Activated naive CD4-positive, alpha-beta T cell treated with anti-CD3 and anti-CD28 coated beads for 36 hours (primary cell): ENCODE measurements at regions of chr10 and their contacts with region 1.

Region 1: GRCh38 chr10:50624866-50625692 is 1.3 kb upstream of the SGMS1 start:
- DNase-seq: peak; percentile 62
- H3K4me3 Mint-ChIP-seq: peak overlapping the region; percentile 88
- H3K27ac Mint-ChIP-seq: peak overlapping the region; percentile 91
- H3K4me1 Mint-ChIP-seq: peaks cover 30% of the 10 kb centered on the region
- H3K27me3 Mint-ChIP-seq: no peaks in the 10 kb centered on the region

Region 2: DNA sequence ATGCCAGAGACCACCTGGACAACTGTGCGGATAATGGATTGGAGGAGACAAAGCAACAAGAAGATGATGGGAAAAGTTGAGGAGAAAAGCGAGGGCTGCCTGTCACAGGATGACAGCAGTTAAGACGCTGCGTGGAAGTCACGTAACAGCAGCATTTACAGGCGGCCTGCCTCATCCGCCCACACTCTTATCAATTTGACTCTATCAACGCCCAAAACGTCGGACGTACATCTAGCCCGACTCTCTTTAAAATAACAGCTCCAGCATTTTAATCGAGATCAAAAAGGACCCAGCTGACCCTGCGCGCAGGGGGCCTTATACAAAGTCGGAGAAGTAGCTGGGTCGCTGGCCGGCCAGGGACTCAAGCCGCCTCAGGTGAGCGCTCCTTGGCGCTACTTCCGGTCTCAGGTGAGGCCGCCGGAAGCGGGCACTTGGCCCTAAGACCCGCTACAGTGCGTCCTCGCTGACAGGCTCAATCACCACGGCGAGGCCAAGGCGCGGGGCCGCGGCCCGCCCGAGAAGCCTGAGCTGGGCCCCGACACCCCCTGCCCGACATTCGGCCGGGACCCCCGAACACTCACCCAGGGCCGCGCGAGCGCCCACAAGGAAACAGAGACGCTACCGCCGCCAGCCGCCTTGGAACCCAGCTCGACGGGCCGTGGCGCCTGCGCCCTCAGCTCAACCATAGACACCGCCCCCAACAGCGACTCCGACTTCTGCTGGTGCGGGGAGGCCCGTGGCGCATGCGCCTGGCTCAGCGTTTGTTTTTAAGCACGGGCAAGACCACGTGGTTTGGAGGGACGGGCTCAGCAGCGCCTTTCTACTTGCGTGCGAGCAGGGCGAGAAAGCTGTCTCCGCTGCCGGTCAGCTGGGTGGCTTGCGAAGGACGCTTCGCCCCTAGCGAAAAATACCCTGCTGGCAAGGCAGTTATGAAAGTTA is 1086.4 kb before region 1 on chr10 and contains the start of gene ERCC6:
- CTCF ChIA-PET with region 1: no interaction called
- intact Hi-C with region 1: loop called (anchors 2 kb)
- DNase-seq: peak; percentile 97
- H3K4me3 Mint-ChIP-seq: peak within 1 kb of the TSS; percentile 90
- H3K27ac Mint-ChIP-seq: peak within 1 kb of the TSS; percentile 92
- H3K4me1 Mint-ChIP-seq: peaks cover 34% of the 10 kb centered on the region
- H3K27me3 Mint-ChIP-seq: peaks cover 14% of the 10 kb centered on the region
- total RNA-seq, gene ERCC6: 14.2 to 16.2 TPM

Region 3: GRCh38 chr10:50367732-50368131 is 257.3 kb before region 1 on chr10:
- CTCF ChIA-PET with region 1: interaction called, 5 read pairs
- intact Hi-C with region 1: loop called (anchors 2 kb)
- DNase-seq: peak; percentile 19
- H3K4me3 Mint-ChIP-seq: no peak overlapping the region
- H3K27ac Mint-ChIP-seq: no peak overlapping the region
- H3K4me1 Mint-ChIP-seq: peaks cover 2% of the 10 kb centered on the region
- H3K27me3 Mint-ChIP-seq: no peaks in the 10 kb centered on the region

Region 4: GRCh38 chr10:50431791-50432190 is 193.3 kb before region 1 on chr10:
- CTCF ChIA-PET with region 1: no interaction called
- intact Hi-C with region 1: loop called (anchors 1 kb)
- DNase-seq: peak; percentile 45
- H3K4me3 Mint-ChIP-seq: no peak overlapping the region
- H3K27ac Mint-ChIP-seq: peak overlapping the region; percentile 39
- H3K4me1 Mint-ChIP-seq: peaks cover 33% of the 10 kb centered on the region
- H3K27me3 Mint-ChIP-seq: no peaks in the 10 kb centered on the region

Region 5: DNA sequence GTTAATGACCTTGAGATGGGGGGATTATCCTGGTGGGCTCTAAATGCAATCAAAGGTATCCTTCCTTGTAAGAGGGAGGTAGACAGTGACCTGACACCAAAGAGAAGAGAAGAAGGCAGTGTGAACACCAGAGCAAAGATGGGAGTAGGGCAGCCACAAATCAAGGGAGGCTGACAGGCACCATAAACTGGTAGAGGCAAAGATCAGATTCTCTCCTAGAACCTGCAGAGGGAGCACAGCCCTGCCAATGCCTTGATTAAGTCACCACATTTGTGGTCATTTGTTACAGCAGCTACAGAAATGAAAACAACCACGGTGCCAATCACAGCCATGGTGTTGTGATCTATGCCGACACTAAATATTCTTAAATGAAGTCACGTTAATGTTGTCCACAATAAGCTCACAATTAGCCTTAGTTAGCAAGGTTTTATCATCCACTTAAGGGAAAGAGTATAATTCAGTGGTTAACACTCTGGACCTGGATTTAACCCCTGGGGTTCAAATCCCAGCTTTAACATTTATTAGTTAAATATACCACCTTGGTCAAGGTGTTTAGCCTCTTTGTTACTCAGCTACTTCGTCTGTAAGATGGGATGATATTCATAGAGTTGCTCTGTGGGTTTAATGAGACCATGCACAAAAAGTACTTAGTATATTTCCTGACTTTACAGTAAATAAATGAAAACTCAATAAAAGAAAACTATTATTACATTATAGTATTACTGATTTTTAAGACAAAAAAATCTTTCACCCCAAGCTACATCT is 72.1 kb before region 1 on chr10:
- CTCF ChIA-PET with region 1: interaction called, 3 read pairs
- intact Hi-C with region 1: loop called (anchors 2 kb)
- DNase-seq: peak; percentile 31
- H3K4me3 Mint-ChIP-seq: no peak overlapping the region
- H3K27ac Mint-ChIP-seq: no peak overlapping the region
- H3K4me1 Mint-ChIP-seq: peaks cover 28% of the 10 kb centered on the region
- H3K27me3 Mint-ChIP-seq: no peaks in the 10 kb centered on the region

Region 6: DNA sequence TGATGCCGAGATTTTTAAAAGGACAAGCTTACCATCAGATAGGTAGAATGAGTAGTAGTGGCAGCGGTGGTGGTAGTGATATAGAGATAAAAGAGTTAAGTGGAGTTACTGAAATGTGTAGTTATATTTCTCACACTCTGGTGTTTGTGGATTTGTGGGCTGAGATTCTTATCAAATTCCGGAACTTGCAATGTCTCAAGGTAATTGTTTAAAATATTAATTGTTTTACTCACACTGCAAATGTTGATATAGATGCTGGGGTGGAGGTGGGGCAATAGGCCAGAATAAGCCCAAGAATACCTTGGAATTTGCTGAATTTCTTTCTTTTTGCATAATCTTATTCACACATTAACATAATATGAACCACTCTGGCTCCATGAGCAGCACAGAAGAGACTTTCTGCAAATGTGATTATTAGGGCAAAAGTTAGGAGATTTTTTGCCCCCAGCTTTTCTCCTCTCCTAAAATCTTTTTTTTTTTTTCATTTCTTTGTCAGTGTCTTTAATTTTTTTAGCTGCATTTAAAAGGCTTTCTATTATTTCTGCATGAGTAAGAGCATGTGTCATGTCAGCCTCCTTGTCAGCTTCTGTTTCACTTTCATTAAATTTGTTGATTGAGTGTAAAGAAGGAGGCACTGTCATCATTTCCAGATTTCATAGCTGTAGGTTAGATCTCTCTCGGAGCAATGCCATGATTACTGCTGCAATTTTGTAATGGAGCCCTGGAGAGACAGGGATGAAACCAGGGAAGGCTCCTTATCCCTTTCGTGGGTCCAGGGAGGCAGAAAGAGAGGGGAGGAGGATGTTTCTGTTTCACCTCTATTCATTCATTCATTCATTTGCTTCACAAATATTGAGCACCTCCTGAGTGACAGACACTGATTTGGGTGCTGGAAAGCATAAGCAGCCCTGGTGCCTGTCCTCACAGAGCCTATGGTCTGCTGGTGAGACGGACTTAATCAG is 11.8 kb after region 1 on chr10:
- CTCF ChIA-PET with region 1: interaction called, 3 read pairs
- intact Hi-C with region 1: loop called (anchors 1 kb)
- DNase-seq: peak; percentile 55
- H3K4me3 Mint-ChIP-seq: no peak overlapping the region
- H3K27ac Mint-ChIP-seq: peak overlapping the region; percentile 9
- H3K4me1 Mint-ChIP-seq: peaks cover 27% of the 10 kb centered on the region
- H3K27me3 Mint-ChIP-seq: peaks cover 4% of the 10 kb centered on the region

Region 7: DNA sequence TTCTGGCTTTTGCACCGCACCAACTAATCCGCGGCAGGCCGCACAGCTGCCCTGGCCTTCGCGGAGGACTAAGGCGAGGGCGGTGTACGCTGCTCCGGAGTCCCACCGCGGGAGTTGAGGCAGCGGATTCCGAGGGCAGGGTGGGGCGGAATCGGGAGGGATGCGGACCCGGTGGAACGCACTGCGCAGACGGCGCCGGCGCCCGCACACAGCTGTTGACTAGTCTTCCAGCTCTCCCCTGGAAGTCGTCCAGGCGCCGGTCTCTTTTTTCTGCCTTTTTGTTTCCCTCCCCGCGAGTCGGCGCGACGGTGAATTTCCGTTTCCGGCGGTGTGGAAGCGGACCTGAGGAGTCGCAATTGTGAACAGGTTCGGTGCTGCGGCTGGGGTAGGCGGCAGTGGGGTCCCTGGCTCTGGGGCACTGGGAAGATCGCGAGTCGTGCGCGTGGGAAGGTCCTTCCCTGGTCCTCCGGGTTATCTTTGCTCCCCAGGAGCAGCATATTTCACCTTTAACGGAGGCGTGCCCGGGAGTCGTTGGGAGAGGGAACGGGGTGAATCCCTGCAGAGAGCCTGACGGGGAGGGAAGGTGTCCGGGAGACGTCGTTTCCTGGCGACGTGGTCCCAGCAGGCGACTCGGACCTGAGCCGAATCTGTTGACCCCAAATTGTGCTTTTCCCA is 114.7 kb after region 1 on chr10 and contains the start of gene ASAH2B:
- CTCF ChIA-PET with region 1: no interaction called
- intact Hi-C with region 1: loop called (anchors 1 kb)
- DNase-seq: peak; percentile 88
- H3K4me3 Mint-ChIP-seq: peak within 1 kb of the TSS; percentile 98
- H3K27ac Mint-ChIP-seq: peak within 1 kb of the TSS; percentile 95
- H3K4me1 Mint-ChIP-seq: peaks cover 16% of the 10 kb centered on the region
- H3K27me3 Mint-ChIP-seq: peaks cover 2% of the 10 kb centered on the region
- total RNA-seq, gene ASAH2B: 3.9 to 4.6 TPM